Posterior vena cava (tissue), 2 donors: ENCODE measurements at regions of chr13 and their contacts with region 1.

Region 1: DNA sequence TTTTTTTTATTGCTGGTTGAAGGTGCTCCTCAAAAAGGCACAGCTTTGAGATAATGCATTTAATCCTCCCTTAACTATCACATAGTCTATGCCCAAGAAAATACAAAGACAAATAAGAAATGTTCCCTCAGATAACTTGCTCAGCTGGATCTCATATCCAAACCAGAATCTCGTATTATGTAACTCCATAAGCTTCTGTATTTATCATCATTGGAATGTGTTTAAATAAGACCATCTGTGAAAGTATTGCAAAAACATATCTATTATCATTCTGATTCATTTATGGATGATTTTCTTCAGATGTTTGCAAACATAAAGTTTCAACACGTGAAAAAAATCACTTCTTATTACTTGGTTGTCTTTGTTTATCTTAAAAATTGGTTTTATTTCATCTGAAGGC is 190.9 kb downstream of the IRS2 start:
- DNase-seq: no peak

Region 2: DNA sequence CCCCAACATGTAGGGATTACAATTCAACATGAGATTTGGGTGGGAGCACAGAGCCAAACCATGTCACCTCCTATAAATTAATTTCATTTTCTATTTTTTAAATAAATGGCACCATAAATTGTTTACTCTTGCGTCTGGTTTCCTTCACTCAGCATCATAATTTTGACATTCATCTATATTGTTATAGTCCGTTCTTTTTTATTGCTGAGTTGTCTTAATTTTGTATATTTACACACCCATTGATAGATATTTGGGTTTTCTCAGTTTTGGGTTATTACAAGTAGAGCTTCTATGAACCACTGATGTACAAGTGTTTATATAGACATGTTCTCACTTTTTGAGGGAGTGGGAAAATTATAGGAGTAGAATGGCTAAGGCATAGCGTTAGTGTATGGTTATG is 520.6 kb before region 1 on chr13:
- intact Hi-C with region 1: loop called in 1 of 2 experiments (anchors 5 kb)
- DNase-seq: no peak

Region 3: GRCh38 chr13:109569958-109570711 is 25.3 kb before region 1 on chr13:
- intact Hi-C with region 1: no loop called
- DNase-seq: no peak

Region 4: GRCh38 chr13:109646423-109646822 is 51.0 kb after region 1 on chr13:
- intact Hi-C with region 1: no loop called
- DNase-seq: no peak

Region 5: DNA sequence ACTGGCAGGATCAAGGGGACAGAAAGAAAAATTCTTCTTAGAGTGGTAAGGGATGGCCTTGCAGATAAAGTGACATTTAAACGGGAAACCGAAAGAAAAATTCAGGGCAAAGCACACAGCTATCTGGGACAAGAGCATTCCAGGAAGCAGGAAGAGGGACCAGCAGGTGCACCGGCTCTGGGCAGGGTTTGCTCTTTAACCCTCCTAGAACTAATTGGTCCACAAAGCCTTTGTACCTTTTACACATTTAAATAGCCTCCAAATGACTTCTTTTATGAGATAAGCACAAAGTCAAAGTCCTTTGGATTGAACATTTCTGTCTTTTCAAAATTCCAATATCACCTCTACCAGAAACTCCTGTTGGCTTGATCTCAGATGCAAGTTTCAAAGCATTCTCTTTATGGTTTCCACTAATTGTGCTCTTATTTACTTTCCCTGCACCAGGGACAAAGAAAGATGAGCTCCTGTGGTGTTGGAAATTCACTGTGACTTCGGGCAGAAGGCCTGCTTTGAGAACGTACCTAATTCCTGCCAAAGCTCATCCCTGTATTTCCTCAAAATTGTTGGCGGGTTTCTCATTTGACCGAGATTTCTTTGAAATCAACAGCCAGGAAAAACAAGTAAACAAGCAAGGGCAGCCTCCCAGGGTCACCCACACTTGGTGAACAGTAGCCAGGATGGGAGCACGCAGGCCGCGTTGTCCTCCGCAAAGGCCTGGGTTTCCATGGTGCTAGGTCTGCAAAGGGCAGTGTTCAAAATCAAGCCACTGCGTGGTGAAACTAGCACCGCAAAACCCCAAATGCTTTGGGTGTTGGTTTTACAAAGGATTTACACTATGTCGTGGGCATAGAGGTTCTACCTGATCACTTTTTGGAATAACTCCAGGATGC is 92.3 kb after region 1 on chr13:
- intact Hi-C with region 1: no loop called
- DNase-seq: no peak

Region 6: DNA sequence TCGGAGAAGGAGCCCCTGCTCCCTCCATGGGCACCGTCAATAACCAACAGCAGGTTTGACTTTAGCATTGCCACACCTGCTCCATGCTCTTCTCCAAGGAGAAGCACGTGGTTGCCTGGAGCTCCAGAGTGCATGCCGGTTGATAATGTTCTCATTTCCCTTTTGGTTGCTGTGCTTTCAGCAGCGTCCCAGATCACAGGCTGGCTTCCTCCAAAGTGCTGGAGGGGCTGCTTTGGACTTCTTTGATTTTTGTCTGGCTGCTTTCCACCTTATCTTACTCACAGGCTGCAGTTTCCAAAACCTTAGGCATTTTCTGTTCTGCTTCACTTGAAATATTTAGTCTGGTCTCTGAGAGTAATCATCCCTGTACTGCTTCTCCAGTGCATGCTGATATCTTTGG is 314.7 kb after region 1 on chr13:
- intact Hi-C with region 1: no loop called
- DNase-seq: no peak